Psoas muscle (tissue), 8 donors: ENCODE measurements at regions of chr3 and their contacts with region 1.

Region 1: GRCh38 chr3:136752422-136753325 is 496 bp upstream of the STAG1 start:
- DNase-seq: peak; percentile 99
- ATAC-seq: peak; percentile 93 to 95 (median 94)
- H3K4me3 ChIP-seq: peak overlapping the region; percentile 82
- H3K27ac ChIP-seq: peak overlapping the region; percentile 98
- H3K4me1 ChIP-seq: peaks cover 31% of the 10 kb centered on the region
- H3K27me3 ChIP-seq: no peaks in the 10 kb centered on the region
- CTCF ChIP-seq: no peak

Region 2: DNA sequence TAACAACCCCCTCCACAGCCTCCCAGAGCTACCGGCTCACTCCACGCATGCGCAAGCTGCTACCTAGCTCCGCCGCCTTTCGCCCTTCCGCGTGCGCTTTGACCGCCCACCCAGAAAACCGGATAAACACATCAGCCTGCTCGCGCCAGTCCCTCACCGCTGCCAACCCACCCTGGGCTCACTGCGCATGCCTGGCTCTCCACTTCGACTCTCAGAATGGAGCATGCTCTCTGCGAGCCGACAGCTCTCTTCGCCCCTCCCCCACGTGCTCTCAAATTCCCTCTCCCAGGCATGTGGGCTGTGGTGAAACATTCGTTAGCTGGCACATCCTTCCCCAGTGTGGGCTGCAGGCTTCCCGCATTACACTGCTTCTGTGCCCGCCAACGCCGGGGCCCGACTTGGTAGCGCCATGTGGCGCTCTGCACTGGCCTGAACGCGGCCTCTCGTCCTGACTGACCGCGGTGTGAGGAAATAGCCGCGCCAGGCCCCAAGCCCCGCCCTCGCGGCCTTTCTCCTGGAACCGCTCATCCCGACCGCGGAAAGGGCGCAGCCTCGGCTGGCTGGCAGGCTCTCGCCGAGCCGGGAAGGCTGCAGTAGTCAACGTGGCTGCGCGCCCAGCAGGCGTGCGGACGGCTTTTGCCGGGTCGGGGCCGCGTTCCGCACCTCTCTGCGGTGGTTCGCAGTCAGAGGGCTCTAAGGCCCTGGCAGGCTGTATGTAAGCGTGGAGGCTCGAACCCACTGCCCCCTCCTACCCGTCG is 556.1 kb before region 1 on chr3:
- intact Hi-C with region 1: loop called (anchors 10 kb)
- DNase-seq: peak; percentile 99 to 100
- ATAC-seq: peak; percentile 85 to 88 (median 86)
- H3K4me3 ChIP-seq: peak overlapping the region; percentile 99
- H3K27ac ChIP-seq: peak overlapping the region; percentile 100
- H3K4me1 ChIP-seq: peaks cover 29% of the 10 kb centered on the region
- H3K27me3 ChIP-seq: no peaks in the 10 kb centered on the region
- CTCF ChIP-seq: no peak

Region 3: DNA sequence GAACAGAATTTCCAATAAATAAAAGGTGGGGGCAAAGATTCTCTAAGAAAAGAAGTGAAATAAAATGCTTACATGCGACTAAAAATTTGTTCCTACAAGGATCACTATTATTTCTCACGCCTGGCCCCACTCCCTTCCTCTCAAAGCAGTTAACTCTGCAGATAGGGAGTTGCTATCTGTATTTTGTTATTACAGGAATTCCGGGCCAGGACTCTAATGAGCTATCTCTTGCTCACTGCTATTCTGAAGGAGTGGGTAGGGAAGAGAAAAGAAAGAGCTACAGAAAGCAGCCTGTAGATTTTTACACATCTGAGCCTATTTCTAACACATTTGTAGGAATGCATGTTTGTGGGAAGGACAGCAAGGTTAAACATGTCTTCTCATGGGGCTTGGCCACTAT is 362.1 kb before region 1 on chr3:
- intact Hi-C with region 1: loop called (anchors 1 to 10 kb)
- DNase-seq: no peak
- ATAC-seq: no peak
- H3K4me3 ChIP-seq: no peak overlapping the region
- H3K27ac ChIP-seq: no peak overlapping the region
- H3K4me1 ChIP-seq: no peaks in the 10 kb centered on the region
- H3K27me3 ChIP-seq: no peaks in the 10 kb centered on the region
- CTCF ChIP-seq: no peak

Region 4: GRCh38 chr3:136545664-136546268 is 206.9 kb before region 1 on chr3:
- intact Hi-C with region 1: loop called in 1 of 2 experiments (anchors 5 kb)
- DNase-seq: no peak
- ATAC-seq: no peak
- H3K4me3 ChIP-seq: no peak overlapping the region
- H3K27ac ChIP-seq: no peak overlapping the region
- H3K4me1 ChIP-seq: no peaks in the 10 kb centered on the region
- H3K27me3 ChIP-seq: no peaks in the 10 kb centered on the region
- CTCF ChIP-seq: peak; percentile 25

Region 5: GRCh38 chr3:136861890-136862616 is 109.4 kb after region 1 on chr3 and contains the start of gene NCK1:
- intact Hi-C with region 1: loop called in 1 of 2 experiments (anchors 10 kb)
- DNase-seq: peak; percentile 99
- ATAC-seq: peak; percentile 97 to 99 (median 98)
- H3K4me3 ChIP-seq: peak within 1 kb of the TSS; percentile 92
- H3K27ac ChIP-seq: peak within 1 kb of the TSS; percentile 97
- H3K4me1 ChIP-seq: peaks cover 16% of the 10 kb centered on the region
- H3K27me3 ChIP-seq: no peaks in the 10 kb centered on the region
- CTCF ChIP-seq: peak; percentile 6
- total RNA-seq, gene NCK1: 25.4 to 33.4 (median 30.7) TPM